Esophagus squamous epithelium (tissue), 5 donors: ENCODE measurements at regions of chr2 and their contacts with region 1.

Region 1: GRCh38 chr2:173965329-173966025 is at the start of gene SP3:
- DNase-seq: peak; percentile 82
- H3K4me3 ChIP-seq: peak within 1 kb of the TSS; percentile 83 to 99 (median 94)
- H3K27ac ChIP-seq: peak within 1 kb of the TSS; percentile 98 to 100 (median 100)
- H3K4me1 ChIP-seq: peaks cover 0 to 38% (median 14%) of the 10 kb centered on the region in 3 donors
- H3K27me3 ChIP-seq: no peaks in the 10 kb centered on the region
- CTCF ChIP-seq: peak in 2 of 6 experiments; percentile 5 to 21
- POLR2A ChIP-seq: peak in 3 of 4 donors; percentile 59 to 97 (median 76)
- total RNA-seq, gene SP3: 41.3 to 97.8 (median 67.6) TPM

Region 2: DNA sequence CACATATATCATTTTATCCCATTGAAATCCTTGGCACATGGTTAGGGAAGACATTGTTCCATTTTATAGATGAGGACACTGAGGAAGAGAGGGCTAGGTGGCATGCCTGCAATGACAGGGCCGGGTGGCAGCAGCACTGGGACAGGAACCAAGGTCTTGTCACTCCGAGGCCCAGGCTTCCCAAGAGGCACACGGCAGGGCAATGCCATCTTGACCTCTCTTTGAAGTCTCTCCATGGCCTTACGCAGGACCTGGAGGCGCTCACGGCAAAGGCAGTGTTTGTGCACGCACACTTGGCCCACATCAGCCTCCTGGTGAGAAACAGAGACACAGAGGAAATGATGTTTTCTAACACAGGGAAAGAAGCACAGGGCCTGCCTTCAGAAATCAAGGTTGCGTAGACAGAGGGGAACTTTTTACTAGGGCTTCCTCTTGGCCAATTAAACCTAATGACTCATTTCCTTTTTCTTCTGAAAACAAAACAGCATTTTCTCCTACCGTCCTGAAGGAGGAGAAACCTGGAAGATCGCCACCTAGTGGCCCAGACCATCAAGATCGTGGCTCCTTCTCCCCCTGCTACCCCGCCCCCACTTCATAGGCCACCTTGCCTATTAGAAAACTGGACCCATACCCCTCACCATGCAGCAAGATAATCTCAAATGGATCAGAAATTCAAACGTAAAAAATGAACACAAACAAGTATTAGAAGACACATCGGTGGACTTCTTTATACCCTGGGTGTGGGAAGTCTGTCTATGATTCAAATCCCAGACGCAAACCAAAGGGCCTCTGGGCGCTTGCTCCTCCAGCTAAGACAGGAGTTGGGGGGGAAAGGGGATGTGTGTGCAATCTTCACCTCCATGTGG is 74.3 kb after region 1 on chr2:
- intact Hi-C with region 1: loop called (anchors 10 kb)
- DNase-seq: peak; percentile 59
- H3K4me3 ChIP-seq: peak overlapping the region in 2 of 4 donors; percentile 5 to 41
- H3K27ac ChIP-seq: peak overlapping the region; percentile 76 to 94 (median 85)
- H3K4me1 ChIP-seq: peaks cover 0 to 38% (median 16%) of the 10 kb centered on the region in 3 donors
- H3K27me3 ChIP-seq: no peaks in the 10 kb centered on the region
- CTCF ChIP-seq: peak; percentile 72 to 91 (median 87)
- POLR2A ChIP-seq: no peak